Breast epithelium (tissue), 4 donors: ENCODE measurements at regions of chr2 and their contacts with region 1.

Region 1: GRCh38 chr2:198175271-198175670 is 370.9 kb downstream of the PLCL1 start:
- DNase-seq: no peak
- H3K4me3 ChIP-seq: no peak overlapping the region
- H3K27ac ChIP-seq: no peak overlapping the region
- H3K4me1 ChIP-seq: no peaks in the 10 kb centered on the region
- H3K27me3 ChIP-seq: no peaks in the 10 kb centered on the region
- CTCF ChIP-seq: no peak
- POLR2A ChIP-seq: no peak

Region 2: GRCh38 chr2:196544906-196545433 is 1630.3 kb before region 1 on chr2:
- intact Hi-C with region 1: no loop called
- DNase-seq: no peak
- H3K4me3 ChIP-seq: no peak overlapping the region
- H3K27ac ChIP-seq: no peak overlapping the region
- H3K4me1 ChIP-seq: no peaks in the 10 kb centered on the region
- H3K27me3 ChIP-seq: no peaks in the 10 kb centered on the region
- CTCF ChIP-seq: no peak
- POLR2A ChIP-seq: no peak

Region 3: GRCh38 chr2:198127627-198128026 is 47.6 kb before region 1 on chr2:
- intact Hi-C with region 1: no loop called
- DNase-seq: no peak
- H3K4me3 ChIP-seq: no peak overlapping the region
- H3K27ac ChIP-seq: no peak overlapping the region
- H3K4me1 ChIP-seq: no peaks in the 10 kb centered on the region
- H3K27me3 ChIP-seq: no peaks in the 10 kb centered on the region
- CTCF ChIP-seq: peak in 2 of 3 donors; percentile 40 to 51
- POLR2A ChIP-seq: no peak

Region 4: DNA sequence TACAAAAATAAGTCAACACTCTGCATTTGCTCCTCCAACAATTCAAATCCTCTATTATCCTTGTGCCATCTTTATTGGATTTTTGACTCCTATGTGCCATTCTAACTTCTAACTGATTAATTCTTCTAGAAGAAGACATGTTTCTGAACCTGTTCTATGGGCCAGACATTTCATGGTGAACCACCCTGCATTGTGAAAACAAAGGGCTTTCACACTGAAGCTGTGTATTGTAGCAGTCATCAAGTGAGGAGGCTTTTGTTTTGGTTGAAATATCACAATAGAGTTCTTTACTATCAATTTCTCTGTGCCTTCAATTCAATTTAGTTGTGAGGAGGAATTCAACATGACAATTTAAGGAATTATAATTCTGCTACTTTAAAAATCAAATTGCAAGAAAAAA is 13.0 kb before region 1 on chr2:
- intact Hi-C with region 1: no loop called
- DNase-seq: no peak
- H3K4me3 ChIP-seq: no peak overlapping the region
- H3K27ac ChIP-seq: no peak overlapping the region
- H3K4me1 ChIP-seq: no peaks in the 10 kb centered on the region
- H3K27me3 ChIP-seq: no peaks in the 10 kb centered on the region
- CTCF ChIP-seq: no peak
- POLR2A ChIP-seq: no peak

Region 5: DNA sequence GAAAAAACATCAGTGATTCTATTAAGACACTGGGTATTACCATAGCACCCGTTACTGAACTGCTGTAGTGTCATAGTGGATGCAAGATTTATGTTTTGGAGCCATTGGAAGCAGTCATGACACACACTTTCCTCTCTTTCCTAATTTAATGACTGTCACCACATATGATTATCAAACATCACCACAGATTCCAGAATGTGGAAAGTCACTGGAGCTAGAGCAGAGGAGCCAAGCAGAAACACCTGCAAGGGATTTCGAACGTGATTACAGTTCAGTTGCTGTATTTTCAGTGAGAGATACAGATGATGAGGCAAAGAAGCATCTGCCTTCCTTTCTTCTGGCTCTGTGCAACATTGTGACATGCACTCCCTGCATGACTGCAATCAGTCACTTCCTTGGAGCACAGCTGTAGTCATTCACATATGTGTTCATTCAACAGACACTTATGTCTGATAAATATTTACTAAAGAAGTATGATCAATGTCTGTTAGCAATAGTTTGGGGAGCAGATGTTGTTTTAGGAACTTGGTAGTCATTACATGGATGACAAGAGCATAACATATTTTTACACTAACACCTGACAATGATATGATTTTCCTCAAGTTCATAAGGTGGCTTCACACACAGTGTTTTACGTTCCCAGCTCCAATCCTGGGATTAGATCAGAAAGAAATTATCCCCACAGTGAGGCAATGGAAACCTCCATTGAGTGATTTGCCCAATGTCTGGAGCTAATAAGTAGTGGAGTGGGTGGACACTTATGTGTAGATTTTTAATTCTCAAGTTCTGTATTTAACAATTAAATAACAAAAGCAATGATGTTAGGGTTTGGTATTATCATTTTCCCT is 45.7 kb after region 1 on chr2:
- intact Hi-C with region 1: no loop called
- DNase-seq: no peak
- H3K4me3 ChIP-seq: no peak overlapping the region
- H3K27ac ChIP-seq: no peak overlapping the region
- H3K4me1 ChIP-seq: no peaks in the 10 kb centered on the region
- H3K27me3 ChIP-seq: no peaks in the 10 kb centered on the region
- CTCF ChIP-seq: no peak
- POLR2A ChIP-seq: no peak

Region 6: DNA sequence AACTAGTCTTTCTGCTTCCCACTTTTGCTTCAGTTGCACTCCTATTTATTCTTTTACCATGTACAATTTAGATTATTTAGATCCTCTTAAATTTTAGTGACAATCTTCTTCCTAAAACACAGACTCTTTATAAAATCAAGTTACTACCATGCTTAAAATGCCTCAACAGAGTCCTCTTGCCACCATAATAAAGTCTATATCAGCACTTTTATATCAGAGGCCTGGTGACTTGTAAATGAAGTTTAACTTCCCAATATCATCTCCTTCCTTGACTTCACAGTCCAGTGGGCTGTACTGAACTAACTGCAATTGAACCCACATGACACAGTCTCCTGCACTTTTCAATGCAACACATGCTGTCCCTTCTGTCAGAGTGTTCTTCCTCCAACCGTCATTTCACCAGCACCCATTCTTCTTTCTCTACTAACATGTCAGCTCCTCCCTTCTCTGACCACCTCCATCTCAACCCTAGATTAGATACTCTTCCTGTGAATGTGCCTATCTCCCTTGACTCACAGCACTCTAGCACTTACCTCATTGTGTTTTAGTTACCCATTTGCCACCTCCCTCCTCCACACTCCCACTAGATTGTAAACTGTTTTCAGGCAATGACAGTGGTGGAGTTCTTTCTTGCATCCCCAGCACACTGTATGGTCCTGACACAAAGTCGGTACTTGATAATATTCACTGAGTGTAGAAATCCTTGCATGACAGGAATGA is 867.5 kb after region 1 on chr2:
- intact Hi-C with region 1: loop called (anchors 5 kb)
- DNase-seq: no peak
- H3K4me3 ChIP-seq: no peak overlapping the region
- H3K27ac ChIP-seq: no peak overlapping the region
- H3K4me1 ChIP-seq: no peaks in the 10 kb centered on the region
- H3K27me3 ChIP-seq: no peaks in the 10 kb centered on the region
- CTCF ChIP-seq: no peak
- POLR2A ChIP-seq: no peak